ENCODE measurements at regions of chr15 and their contacts with region 1.

Region 1: GRCh38 chr15:38072348-38073177 is 138.1 kb downstream of the TMCO5A start:
- DNase-seq: peak; percentile 48
- H3K4me3 Mint-ChIP-seq: peak overlapping the region; percentile 50
- H3K27ac Mint-ChIP-seq: no peak overlapping the region
- H3K4me1 Mint-ChIP-seq: peaks cover 27% of the 10 kb centered on the region
- H3K27me3 Mint-ChIP-seq: peaks cover 59% of the 10 kb centered on the region

Region 2: GRCh38 chr15:38084289-38084688 is 11.7 kb after region 1 on chr15:
- CTCF ChIA-PET with region 1: interaction called, 5 read pairs
- POLR2A ChIA-PET with region 1: no interaction called
- intact Hi-C with region 1: loop called (anchors 1 kb)
- DNase-seq: no peak
- H3K4me3 Mint-ChIP-seq: no peak overlapping the region
- H3K27ac Mint-ChIP-seq: no peak overlapping the region
- H3K4me1 Mint-ChIP-seq: peaks cover 10% of the 10 kb centered on the region
- H3K27me3 Mint-ChIP-seq: peaks cover 18% of the 10 kb centered on the region

Region 3: GRCh38 chr15:38308797-38309196 is 236.2 kb after region 1 on chr15:
- CTCF ChIA-PET with region 1: no interaction called
- POLR2A ChIA-PET with region 1: no interaction called
- intact Hi-C with region 1: loop called (anchors 5 kb)
- DNase-seq: peak; percentile 42
- H3K4me3 Mint-ChIP-seq: no peak overlapping the region
- H3K27ac Mint-ChIP-seq: no peak overlapping the region
- H3K4me1 Mint-ChIP-seq: peaks cover 22% of the 10 kb centered on the region
- H3K27me3 Mint-ChIP-seq: peaks cover 32% of the 10 kb centered on the region